ENCODE measurements at regions of chr9 and their contacts with region 1.

Region 1: DNA sequence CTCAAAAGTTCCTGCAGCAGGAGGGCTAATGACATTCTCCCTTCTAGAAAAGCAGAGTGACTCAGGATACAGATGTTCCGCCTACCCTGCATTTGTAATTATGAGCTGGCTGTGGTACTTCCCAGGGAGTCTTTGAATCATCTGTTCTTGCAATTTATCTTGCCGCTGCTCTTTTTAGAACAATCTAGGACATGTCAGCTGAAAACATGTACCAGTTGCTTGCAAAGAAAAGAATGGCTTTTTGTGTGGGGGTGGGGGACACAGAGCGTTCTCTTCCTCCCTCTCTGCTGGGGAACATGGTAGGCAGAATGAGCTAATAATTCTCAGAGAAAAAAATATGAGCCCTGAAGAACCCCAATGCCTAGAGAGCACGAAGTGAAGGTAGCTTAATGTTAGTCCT is 51.7 kb upstream of the TUT7 start:
- DNase-seq: peak; percentile 90
- H3K4me3 ChIP-seq: peak overlapping the region in 1 of 4 donors; percentile 27
- H3K27ac ChIP-seq: peak overlapping the region; percentile 64 to 81 (median 78)
- H3K4me1 ChIP-seq: peaks cover 21 to 38% (median 33%) of the 10 kb centered on the region in 4 donors
- H3K27me3 ChIP-seq: no peaks in the 10 kb centered on the region
- CTCF ChIP-seq: no peak
- EP300 ChIP-seq: no peak
- POLR2A ChIP-seq: no peak

Region 2: GRCh38 chr9:86354011-86354817 is 51.7 kb before region 1 on chr9 and contains the start of gene TUT7:
- intact Hi-C with region 1: loop called (anchors 2 kb)
- DNase-seq: peak; percentile 98
- H3K4me3 ChIP-seq: peak within 1 kb of the TSS; percentile 71 to 98 (median 96)
- H3K27ac ChIP-seq: peak within 1 kb of the TSS; percentile 92 to 97 (median 96)
- H3K4me1 ChIP-seq: peaks cover 42 to 54% (median 49%) of the 10 kb centered on the region in 4 donors
- H3K27me3 ChIP-seq: no peaks in the 10 kb centered on the region
- CTCF ChIP-seq: no peak
- EP300 ChIP-seq: no peak
- POLR2A ChIP-seq: peak; percentile 67
- total RNA-seq, gene TUT7: 24.5 to 33.0 (median 30.9) TPM

Measured in esophagus muscularis mucosa (tissue), 4 donors.